Activated naive CD4-positive, alpha-beta T cell treated with anti-CD3 and anti-CD28 coated beads, Interleukin-2, amount 10 ng/mL, durations not matched to agents 7 days and 5 days (primary cell): ENCODE measurements at regions of chr1 and their contacts with region 1.

Region 1: DNA sequence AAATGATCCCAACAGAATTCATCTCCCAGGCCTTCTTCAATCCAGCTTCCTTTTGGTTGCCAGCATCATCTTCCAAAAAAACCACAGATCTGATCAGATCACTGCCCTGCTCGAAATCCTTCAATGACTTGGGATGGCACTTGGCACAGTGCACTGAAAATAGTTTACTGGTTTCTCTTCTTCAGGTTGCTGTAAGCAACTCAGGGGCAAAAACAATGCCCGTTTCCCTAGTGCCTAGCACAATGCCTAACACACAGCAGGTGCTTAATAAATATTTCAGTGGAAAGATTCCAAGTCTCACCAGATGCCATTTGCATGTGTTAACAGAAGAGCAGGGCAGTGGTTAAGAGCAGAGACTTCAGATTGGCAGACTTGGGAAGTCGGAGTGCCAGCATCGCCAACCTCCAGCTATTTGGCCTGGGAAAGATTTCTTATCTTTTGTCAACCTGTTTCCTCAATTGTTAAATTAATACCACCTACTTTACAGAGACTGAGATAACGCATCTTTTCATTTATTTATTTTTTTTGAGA is 10.9 kb upstream of the METTL25B start:
- DNase-seq: no peak
- H3K4me3 Mint-ChIP-seq: no peak overlapping the region
- H3K27ac Mint-ChIP-seq: no peak overlapping the region
- H3K4me1 Mint-ChIP-seq: no peaks in the 10 kb centered on the region
- H3K27me3 Mint-ChIP-seq: no peaks in the 10 kb centered on the region

Region 2: DNA sequence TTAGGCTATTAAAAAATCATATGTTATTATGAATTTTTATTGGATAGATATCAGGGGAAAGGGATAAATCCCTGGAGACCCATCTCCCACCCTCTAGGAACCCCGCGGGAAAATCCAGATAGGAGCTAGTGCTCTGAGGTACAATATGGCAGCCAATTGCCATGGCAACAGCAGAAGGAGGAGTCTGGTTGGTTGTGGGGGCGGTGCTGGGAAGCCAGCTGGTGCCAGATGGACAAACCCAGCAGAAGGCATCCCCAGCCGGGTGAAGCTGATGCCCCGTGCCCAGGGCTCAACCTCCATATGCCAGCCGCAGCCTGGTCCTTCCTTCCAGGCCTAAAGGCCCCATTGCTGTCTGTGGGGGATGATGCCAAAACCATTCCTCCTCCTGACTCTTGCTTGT is 310.0 kb before region 1 on chr1:
- CTCF ChIA-PET with region 1: no interaction called
- DNase-seq: no peak
- H3K4me3 Mint-ChIP-seq: no peak overlapping the region
- H3K27ac Mint-ChIP-seq: no peak overlapping the region
- H3K4me1 Mint-ChIP-seq: no peaks in the 10 kb centered on the region
- H3K27me3 Mint-ChIP-seq: peaks cover 97% of the 10 kb centered on the region

Region 3: DNA sequence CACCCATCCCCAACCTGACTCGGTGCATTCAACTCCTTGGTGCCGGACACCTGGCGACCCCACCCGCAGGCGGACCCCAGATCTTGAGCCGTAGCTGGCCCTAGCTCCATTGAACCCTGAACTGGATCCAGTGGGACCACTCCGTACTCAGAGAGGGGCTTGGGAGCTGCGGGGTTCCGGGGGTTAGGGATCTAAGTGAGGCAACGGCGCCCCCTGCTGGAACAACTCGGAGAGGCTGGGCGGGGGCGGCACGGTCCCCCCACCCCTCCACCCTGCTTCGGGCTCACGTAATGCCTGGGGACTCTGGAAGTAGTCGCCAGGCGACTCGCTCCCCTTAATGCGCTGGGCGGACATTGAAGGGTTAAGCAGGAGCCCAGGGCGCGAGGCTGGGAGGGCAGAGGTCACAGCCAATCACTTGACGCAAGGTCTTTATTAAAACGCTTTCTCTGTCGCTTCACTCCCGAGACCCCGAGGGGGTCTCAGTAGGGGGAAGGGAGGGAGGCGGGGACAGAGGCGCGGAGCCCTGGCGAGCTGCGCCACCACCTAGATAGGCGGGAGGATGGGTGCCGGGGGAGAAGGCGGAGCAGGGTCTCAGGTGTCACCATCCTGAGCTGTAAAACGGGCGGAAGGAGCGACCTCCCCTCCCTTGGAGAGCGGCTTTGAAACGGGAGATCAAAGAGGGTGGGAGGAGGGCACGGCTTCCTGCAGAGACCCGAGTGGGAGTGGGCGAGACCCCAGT is 11.3 kb before region 1 on chr1:
- CTCF ChIA-PET with region 1: interaction called, 27 read pairs
- DNase-seq: peak; percentile 78
- H3K4me3 Mint-ChIP-seq: peak overlapping the region; percentile 77
- H3K27ac Mint-ChIP-seq: no peak overlapping the region
- H3K4me1 Mint-ChIP-seq: peaks cover 24% of the 10 kb centered on the region
- H3K27me3 Mint-ChIP-seq: peaks cover 72% of the 10 kb centered on the region

Region 4: GRCh38 chr1:156751758-156752757 is 34.7 kb after region 1 on chr1:
- CTCF ChIA-PET with region 1: no interaction called
- DNase-seq: peak; percentile 99
- H3K4me3 Mint-ChIP-seq: peak overlapping the region; percentile 91
- H3K27ac Mint-ChIP-seq: peak overlapping the region; percentile 92
- H3K4me1 Mint-ChIP-seq: peaks cover 56% of the 10 kb centered on the region
- H3K27me3 Mint-ChIP-seq: no peaks in the 10 kb centered on the region